ENCODE measurements at regions of chr20 and their contacts with region 1.

Region 1: GRCh38 chr20:62907384-62908317 is 18.7 kb downstream of the DIDO1 start:
- DNase-seq: peak; percentile 61
- ATAC-seq: peak; percentile 81
- H3K4me3 Mint-ChIP-seq: no peak overlapping the region
- H3K27ac Mint-ChIP-seq: peak overlapping the region; percentile 92
- H3K4me1 Mint-ChIP-seq: peaks cover 3% of the 10 kb centered on the region
- H3K27me3 Mint-ChIP-seq: no peaks in the 10 kb centered on the region
- CTCF ChIP-seq: peak; percentile 63

Region 2: DNA sequence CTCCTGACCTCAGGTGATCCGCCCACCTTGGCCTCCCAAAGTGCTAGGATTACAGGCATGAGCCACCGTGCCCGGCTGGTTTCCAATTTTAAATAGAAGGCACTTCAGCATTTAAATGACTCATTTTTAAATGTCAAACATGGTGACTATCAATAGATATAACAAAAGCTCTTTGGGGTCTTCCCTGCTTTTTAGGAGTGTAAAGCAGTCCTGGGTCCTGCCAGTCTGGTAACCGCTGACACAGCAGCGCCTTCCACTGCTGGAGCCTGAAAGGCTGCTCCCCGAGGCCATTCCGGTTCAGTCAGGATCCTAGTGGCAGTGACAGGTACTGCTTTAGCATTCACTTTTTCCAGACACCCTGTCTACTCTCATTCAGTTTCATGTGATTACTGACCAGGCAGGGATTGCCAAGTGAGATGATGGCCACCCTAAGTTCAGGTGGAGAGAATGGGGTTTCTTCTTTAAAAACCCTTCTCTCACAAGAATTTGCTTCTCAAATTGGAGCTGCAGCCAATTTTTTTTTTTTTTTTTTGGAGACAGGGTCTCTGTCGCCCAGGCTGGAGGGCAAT is 13.6 kb after region 1 on chr20:
- CTCF ChIA-PET with region 1: interaction called, 11 read pairs
- POLR2A ChIA-PET with region 1: no interaction called
- DNase-seq: peak; percentile 72
- ATAC-seq: peak; percentile 77
- H3K4me3 Mint-ChIP-seq: peak overlapping the region; percentile 45
- H3K27ac Mint-ChIP-seq: peak overlapping the region; percentile 97
- H3K4me1 Mint-ChIP-seq: peaks cover 80% of the 10 kb centered on the region
- H3K27me3 Mint-ChIP-seq: no peaks in the 10 kb centered on the region; the same call in 1 of the 2 replicates
- CTCF ChIP-seq: peak; percentile 52

Region 3: GRCh38 chr20:62972270-62973032 is 64.8 kb after region 1 on chr20:
- CTCF ChIA-PET with region 1: no interaction called
- POLR2A ChIA-PET with region 1: no interaction called
- DNase-seq: peak; percentile 94
- ATAC-seq: peak; percentile 87
- H3K4me3 Mint-ChIP-seq: peak overlapping the region; percentile 60
- H3K27ac Mint-ChIP-seq: no peak overlapping the region
- H3K4me1 Mint-ChIP-seq: peaks cover 30% of the 10 kb centered on the region
- H3K27me3 Mint-ChIP-seq: peaks cover 49% of the 10 kb centered on the region
- CTCF ChIP-seq: peak; percentile 66

Region 4: GRCh38 chr20:62999580-62999979 is 91.9 kb after region 1 on chr20:
- CTCF ChIA-PET with region 1: no interaction called
- POLR2A ChIA-PET with region 1: no interaction called
- DNase-seq: no peak
- ATAC-seq: no peak
- H3K4me3 Mint-ChIP-seq: no peak overlapping the region
- H3K27ac Mint-ChIP-seq: no peak overlapping the region
- H3K4me1 Mint-ChIP-seq: peaks cover 30% of the 10 kb centered on the region
- H3K27me3 Mint-ChIP-seq: peaks cover 63% of the 10 kb centered on the region
- CTCF ChIP-seq: no peak